ENCODE measurements at regions of chr2 and their contacts with region 1.

Region 1: GRCh38 chr2:97740590-97741182 is 27.3 kb downstream of the ZAP70 start:
- DNase-seq: peak; percentile 85

Region 2: GRCh38 chr2:97697252-97698235 is 43.1 kb before region 1 on chr2:
- CTCF ChIA-PET with region 1: interaction called, 13 read pairs
- POLR2A ChIA-PET with region 1: no interaction called
- DNase-seq: peak; percentile 84

Region 3: GRCh38 chr2:97722212-97722611 is 18.5 kb before region 1 on chr2:
- CTCF ChIA-PET with region 1: no interaction called
- POLR2A ChIA-PET with region 1: no interaction called
- DNase-seq: no peak

Measured in HEK293T (cell line).